ENCODE measurements at regions of chr3 and their contacts with region 1.

Region 1: DNA sequence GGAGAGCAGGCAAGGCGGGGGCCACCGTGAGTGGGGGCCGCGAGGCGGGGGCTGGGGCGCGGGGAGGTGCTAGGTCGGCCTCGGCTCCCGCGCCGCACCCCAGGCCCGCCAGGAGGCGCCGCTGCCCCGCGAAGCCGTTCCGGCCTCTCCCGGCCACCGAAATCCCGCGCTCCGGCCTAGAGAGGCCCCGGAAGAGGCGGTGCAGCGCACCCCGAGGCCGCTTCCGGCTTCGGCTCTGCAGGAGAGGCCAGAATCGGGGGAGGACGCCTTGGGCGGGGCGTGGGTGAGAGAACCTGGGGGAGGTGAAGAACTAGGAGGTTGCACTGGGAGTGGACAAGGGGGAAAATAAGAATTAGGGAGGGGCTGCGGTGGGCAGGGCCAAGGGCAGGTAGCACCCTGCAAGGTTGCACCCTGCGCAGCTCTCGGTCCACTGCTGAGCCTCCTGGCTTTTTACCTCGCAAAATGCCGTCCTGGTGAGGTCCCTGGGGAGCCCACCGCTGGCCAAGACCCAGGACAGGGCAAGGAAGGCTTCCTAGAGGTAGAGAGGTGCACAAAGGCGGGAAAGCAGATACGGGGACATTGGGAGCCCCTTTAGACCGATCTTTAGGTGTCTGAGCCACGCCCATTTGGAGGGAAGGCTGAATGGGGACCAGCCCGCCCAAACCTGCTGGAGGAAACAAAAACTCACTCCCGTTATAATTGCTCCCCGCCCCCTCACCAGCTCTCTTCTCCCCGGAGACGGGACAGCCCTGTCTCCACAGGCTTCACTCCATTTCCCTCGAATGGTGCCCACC is 8.4 kb upstream of the GNAI2 start:
- DNase-seq: peak; percentile 88 to 93 (median 89)
- H3K4me3 ChIP-seq: peak overlapping the region; percentile 86
- H3K4me3 Mint-ChIP-seq: peak overlapping the region; percentile 89 to 99 (median 94)
- H3K27ac ChIP-seq: peak overlapping the region; percentile 63
- H3K27ac Mint-ChIP-seq: peak overlapping the region; percentile 79 to 96 (median 92)
- H3K4me1 ChIP-seq: peaks cover 20% of the 10 kb centered on the region
- H3K4me1 Mint-ChIP-seq: peaks cover 15 to 33% (median 24%) of the 10 kb centered on the region in 3 donors
- H3K27me3 ChIP-seq: no peaks in the 10 kb centered on the region
- H3K27me3 Mint-ChIP-seq: peaks cover 0 to 3% of the 10 kb centered on the region in 2 donors

Region 2: GRCh38 chr3:50121416-50122032 is 106.1 kb before region 1 on chr3:
- CTCF ChIA-PET with region 1: interaction called, 16 read pairs
- POLR2A ChIA-PET with region 1: interaction called, 4 read pairs
- DNase-seq: peak; percentile 51 to 78 (median 57)
- H3K4me3 ChIP-seq: no peak overlapping the region
- H3K4me3 Mint-ChIP-seq: no peak overlapping the region
- H3K27ac ChIP-seq: no peak overlapping the region
- H3K27ac Mint-ChIP-seq: peak overlapping the region in 2 of 8 donors; percentile 45 to 64
- H3K4me1 ChIP-seq: no peaks in the 10 kb centered on the region
- H3K4me1 Mint-ChIP-seq: peaks cover 0 to 1% (median 0%) of the 10 kb centered on the region in 3 donors
- H3K27me3 ChIP-seq: no peaks in the 10 kb centered on the region
- H3K27me3 Mint-ChIP-seq: no peaks in the 10 kb centered on the region

Region 3: GRCh38 chr3:50154840-50155474 is 72.6 kb before region 1 on chr3 and contains the start of gene SEMA3F:
- CTCF ChIA-PET with region 1: no interaction called
- POLR2A ChIA-PET with region 1: no interaction called
- DNase-seq: peak; percentile 61 to 71 (median 66)
- H3K4me3 ChIP-seq: no peak within 1 kb of the TSS
- H3K4me3 Mint-ChIP-seq: peak within 1 kb of the TSS; percentile 74 to 90 (median 83)
- H3K27ac ChIP-seq: no peak within 1 kb of the TSS
- H3K27ac Mint-ChIP-seq: peak within 1 kb of the TSS in 2 of 8 donors; percentile 15 to 22
- H3K4me1 ChIP-seq: peaks cover 16% of the 10 kb centered on the region
- H3K4me1 Mint-ChIP-seq: peaks cover 0 to 15% (median 12%) of the 10 kb centered on the region in 3 donors
- H3K27me3 ChIP-seq: peaks cover 26% of the 10 kb centered on the region
- H3K27me3 Mint-ChIP-seq: peaks cover 23 to 49% of the 10 kb centered on the region in 2 donors
- total RNA-seq, gene SEMA3F: not detected

Region 4: DNA sequence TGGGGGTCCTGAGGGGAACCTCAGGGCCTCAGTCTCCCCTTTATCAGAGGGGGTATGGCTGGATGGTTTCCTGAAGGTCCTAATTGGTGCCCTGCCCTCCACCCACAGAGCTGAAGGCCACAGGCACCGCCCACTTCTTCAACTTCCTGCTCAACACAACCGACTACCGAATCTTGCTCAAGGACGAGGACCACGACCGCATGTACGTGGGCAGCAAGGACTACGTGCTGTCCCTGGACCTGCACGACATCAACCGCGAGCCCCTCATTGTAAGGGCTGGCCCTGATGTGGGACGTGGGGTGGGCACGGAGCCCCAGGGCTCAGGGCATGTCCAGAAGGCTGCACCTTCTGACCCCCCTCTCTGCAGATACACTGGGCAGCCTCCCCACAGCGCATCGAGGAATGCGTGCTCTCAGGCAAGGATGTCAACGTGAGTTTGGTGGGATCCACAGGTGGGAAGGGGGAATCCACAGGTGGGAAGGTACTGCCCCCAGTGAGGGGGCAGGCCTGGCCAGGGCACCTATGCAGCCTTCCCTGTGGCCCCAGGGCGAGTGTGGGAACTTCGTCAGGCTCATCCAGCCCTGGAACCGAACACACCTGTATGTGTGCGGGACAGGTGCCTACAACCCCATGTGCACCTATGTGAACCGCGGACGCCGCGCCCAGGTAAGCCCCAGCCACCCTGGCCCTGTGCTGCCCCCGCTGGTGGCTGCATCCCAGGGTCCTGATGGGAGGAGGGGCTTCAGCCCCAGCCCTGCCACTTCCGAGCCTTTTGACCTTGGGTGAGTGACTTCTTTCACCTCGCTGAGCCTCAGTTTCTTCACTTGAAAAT is 53.7 kb before region 1 on chr3:
- CTCF ChIA-PET with region 1: no interaction called
- POLR2A ChIA-PET with region 1: no interaction called
- DNase-seq: no peak
- H3K4me3 ChIP-seq: no peak overlapping the region
- H3K4me3 Mint-ChIP-seq: peak overlapping the region in 1 of 7 donors; percentile 9
- H3K27ac ChIP-seq: no peak overlapping the region
- H3K27ac Mint-ChIP-seq: peak overlapping the region in 1 of 8 donors; percentile 68
- H3K4me1 ChIP-seq: no peaks in the 10 kb centered on the region
- H3K4me1 Mint-ChIP-seq: peaks cover 0 to 4% (median 4%) of the 10 kb centered on the region in 3 donors
- H3K27me3 ChIP-seq: no peaks in the 10 kb centered on the region
- H3K27me3 Mint-ChIP-seq: no peaks in the 10 kb centered on the region

Region 5: GRCh38 chr3:50211930-50212329 is 15.7 kb before region 1 on chr3:
- CTCF ChIA-PET with region 1: interaction called, 12 read pairs
- POLR2A ChIA-PET with region 1: no interaction called
- DNase-seq: no peak
- H3K4me3 ChIP-seq: no peak overlapping the region
- H3K4me3 Mint-ChIP-seq: no peak overlapping the region
- H3K27ac ChIP-seq: no peak overlapping the region
- H3K27ac Mint-ChIP-seq: no peak overlapping the region
- H3K4me1 ChIP-seq: no peaks in the 10 kb centered on the region
- H3K4me1 Mint-ChIP-seq: no peaks in the 10 kb centered on the region
- H3K27me3 ChIP-seq: no peaks in the 10 kb centered on the region
- H3K27me3 Mint-ChIP-seq: peaks cover under 1 to 5% of the 10 kb centered on the region in 2 donors

Region 6: GRCh38 chr3:50260027-50260941 is 32.7 kb after region 1 on chr3:
- CTCF ChIA-PET with region 1: interaction called, 33 read pairs
- POLR2A ChIA-PET with region 1: interaction called, 4 read pairs
- DNase-seq: peak; percentile 77 to 88 (median 80)
- H3K4me3 ChIP-seq: peak overlapping the region; percentile 22
- H3K4me3 Mint-ChIP-seq: peak overlapping the region in 6 of 7 donors; percentile 50 to 86 (median 70)
- H3K27ac ChIP-seq: peak overlapping the region; percentile 47
- H3K27ac Mint-ChIP-seq: peak overlapping the region in 7 of 8 donors; percentile 3 to 98 (median 59)
- H3K4me1 ChIP-seq: peaks cover 5% of the 10 kb centered on the region
- H3K4me1 Mint-ChIP-seq: peaks cover 0 to 13% (median 8%) of the 10 kb centered on the region in 3 donors
- H3K27me3 ChIP-seq: no peaks in the 10 kb centered on the region
- H3K27me3 Mint-ChIP-seq: no peaks in the 10 kb centered on the region

Region 7: DNA sequence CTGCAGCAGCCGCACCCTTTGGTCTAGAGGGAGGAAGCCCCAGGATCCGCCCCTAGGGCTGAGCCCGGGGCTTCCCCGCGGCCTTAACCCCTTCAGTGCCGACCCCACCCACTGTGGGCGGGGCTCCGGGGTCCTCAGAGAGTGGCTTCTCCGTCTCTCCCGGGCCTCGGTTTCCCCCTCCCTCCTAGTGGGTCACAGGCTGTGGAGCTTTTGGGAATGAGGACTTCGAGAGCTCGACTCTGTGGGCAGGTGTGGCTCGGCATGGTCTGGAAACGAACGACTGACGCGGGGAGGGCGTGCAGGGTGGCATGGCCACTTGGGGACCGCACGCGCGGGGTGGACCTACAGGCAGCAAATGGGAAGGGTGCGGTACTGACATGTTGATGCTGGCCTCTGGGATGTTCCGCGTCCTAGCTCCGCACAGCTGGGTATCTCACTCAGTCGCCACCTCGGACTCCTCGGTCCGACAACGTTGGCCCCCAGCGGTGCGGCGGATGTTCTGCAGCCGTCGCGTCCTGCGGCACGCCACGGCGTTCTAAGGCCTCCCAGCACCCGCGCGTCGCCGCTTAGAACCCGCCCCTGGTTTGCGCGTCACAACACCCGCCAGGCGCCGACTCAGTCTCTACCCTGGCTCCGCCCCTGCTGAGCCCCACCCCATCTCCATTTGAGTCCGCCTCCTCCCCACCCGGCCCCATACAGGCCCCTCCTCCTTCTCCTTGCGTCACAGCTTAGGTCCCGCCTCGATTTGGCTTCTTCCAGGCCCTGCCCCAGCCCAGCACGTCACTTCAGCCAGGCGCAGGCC is 71.5 kb after region 1 on chr3 and contains the starts of genes HYAL3 and NAA80:
- CTCF ChIA-PET with region 1: interaction called, 12 read pairs
- POLR2A ChIA-PET with region 1: no interaction called
- DNase-seq: peak; percentile 98 to 100 (median 99)
- H3K4me3 ChIP-seq: peak within 1 kb of the TSS; percentile 89
- H3K4me3 Mint-ChIP-seq: peak within 1 kb of the TSS; percentile 93 to 98 (median 95)
- H3K27ac ChIP-seq: peak within 1 kb of the TSS; percentile 96
- H3K27ac Mint-ChIP-seq: peak within 1 kb of the TSS; percentile 97 to 100 (median 99)
- H3K4me1 ChIP-seq: peaks cover 25% of the 10 kb centered on the region
- H3K4me1 Mint-ChIP-seq: peaks cover 21 to 50% (median 22%) of the 10 kb centered on the region in 3 donors
- H3K27me3 ChIP-seq: no peaks in the 10 kb centered on the region
- H3K27me3 Mint-ChIP-seq: no peaks in the 10 kb centered on the region
- total RNA-seq, gene HYAL3: 7.7 to 8.4 TPM
- total RNA-seq, gene NAA80: 17.3 to 18.3 TPM

Measured in CD8-positive, alpha-beta memory T cell (primary cell).